Activated CD4-positive, alpha-beta T cell treated with anti-CD3 and anti-CD28 coated beads for 36 hours (primary cell): ENCODE measurements at regions of chr9 and their contacts with region 1.

Region 1: GRCh38 chr9:127199001-127199791 is 65.4 kb upstream of the GARNL3 start:
- DNase-seq: peak; percentile 87
- ATAC-seq: peak; percentile 79
- H3K4me3 Mint-ChIP-seq: no peak overlapping the region
- H3K27ac Mint-ChIP-seq: no peak overlapping the region
- H3K4me1 Mint-ChIP-seq: peaks cover 4% of the 10 kb centered on the region
- H3K27me3 Mint-ChIP-seq: peaks cover 5% of the 10 kb centered on the region

Region 2: DNA sequence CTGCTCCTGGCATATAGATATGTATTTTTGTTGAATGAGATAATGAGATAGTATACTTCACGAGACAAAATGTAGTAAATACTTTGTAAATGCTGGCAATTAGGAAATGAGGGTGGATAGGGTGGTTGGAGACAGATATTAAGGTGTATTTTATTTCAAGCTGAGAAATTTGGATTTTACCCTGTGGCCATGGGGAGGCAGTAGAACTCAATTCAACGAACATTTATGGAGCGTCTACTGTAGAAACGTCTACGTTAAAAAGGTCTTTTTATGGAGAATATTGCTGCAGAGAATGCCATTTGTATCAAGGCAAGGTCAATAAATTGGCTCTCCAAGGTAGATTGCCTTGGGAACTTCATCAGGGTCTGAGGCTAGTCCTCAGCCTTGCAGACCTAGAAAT is 306.1 kb before region 1 on chr9:
- CTCF ChIA-PET with region 1: no interaction called
- POLR2A ChIA-PET with region 1: no interaction called
- intact Hi-C with region 1: loop called in 1 of 2 experiments (anchors 1 kb)
- DNase-seq: no peak
- ATAC-seq: no peak
- H3K4me3 Mint-ChIP-seq: no peak overlapping the region
- H3K27ac Mint-ChIP-seq: no peak overlapping the region
- H3K4me1 Mint-ChIP-seq: no peaks in the 10 kb centered on the region
- H3K27me3 Mint-ChIP-seq: peaks cover 8% of the 10 kb centered on the region

Region 3: DNA sequence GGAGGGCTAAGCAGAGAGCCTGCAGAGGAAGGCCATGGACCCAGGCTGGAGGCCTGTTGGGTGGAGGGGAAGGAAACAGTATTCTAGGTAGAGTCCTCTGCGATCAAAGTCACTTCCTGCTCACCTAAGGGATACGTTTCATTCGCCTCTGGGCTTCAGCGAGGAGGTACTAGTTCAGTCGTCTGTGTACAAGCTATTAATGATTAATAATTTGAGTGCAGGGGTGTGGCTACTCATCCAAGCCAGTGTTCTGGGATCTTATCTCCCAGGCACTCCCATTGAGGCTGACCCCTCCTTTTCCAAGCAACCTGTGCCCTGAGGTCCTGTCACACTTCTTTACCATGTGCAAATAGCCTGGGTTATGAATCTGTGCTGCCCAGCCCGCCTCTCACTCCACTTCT is 259.4 kb before region 1 on chr9:
- CTCF ChIA-PET with region 1: interaction called, 90 read pairs
- POLR2A ChIA-PET with region 1: no interaction called
- intact Hi-C with region 1: loop called (anchors 1 kb)
- DNase-seq: no peak
- ATAC-seq: no peak
- H3K4me3 Mint-ChIP-seq: no peak overlapping the region
- H3K27ac Mint-ChIP-seq: no peak overlapping the region
- H3K4me1 Mint-ChIP-seq: peaks cover 4% of the 10 kb centered on the region
- H3K27me3 Mint-ChIP-seq: peaks cover 16% of the 10 kb centered on the region

Region 4: GRCh38 chr9:126965541-126966428 is 233.4 kb before region 1 on chr9:
- CTCF ChIA-PET with region 1: interaction called, 22 read pairs
- POLR2A ChIA-PET with region 1: no interaction called
- intact Hi-C with region 1: loop called (anchors 1 kb)
- DNase-seq: peak; percentile 69
- ATAC-seq: peak; percentile 69
- H3K4me3 Mint-ChIP-seq: no peak overlapping the region
- H3K27ac Mint-ChIP-seq: no peak overlapping the region
- H3K4me1 Mint-ChIP-seq: no peaks in the 10 kb centered on the region
- H3K27me3 Mint-ChIP-seq: peaks cover 15% of the 10 kb centered on the region